Right ventricle myocardium inferior (tissue), 1 donor: ENCODE measurements at regions of chr20 and their contacts with region 1.

Region 1: GRCh38 chr20:64038565-64039292 is 2.7 kb downstream of the C20orf204 start:
- DNase-seq: peak; percentile 89
- ATAC-seq: peak; percentile 80

Region 2: GRCh38 chr20:64119681-64120341 is 81.1 kb after region 1 on chr20:
- intact Hi-C with region 1: loop called (anchors 1 kb)
- DNase-seq: no peak
- ATAC-seq: peak; percentile 16

Region 3: GRCh38 chr20:64131406-64131805 is 92.7 kb after region 1 on chr20:
- intact Hi-C with region 1: no loop called
- DNase-seq: no peak
- ATAC-seq: no peak